ENCODE measurements at regions of chr13 and their contacts with region 1.

Region 1: GRCh38 chr13:110109910-110110309 is 197.0 kb downstream of the COL4A1 start:
- DNase-seq: no peak
- H3K4me3 Mint-ChIP-seq: no peak overlapping the region
- H3K27ac Mint-ChIP-seq: no peak overlapping the region
- H3K4me1 Mint-ChIP-seq: no peaks in the 10 kb centered on the region
- H3K27me3 Mint-ChIP-seq: peaks cover 9% of the 10 kb centered on the region

Region 2: DNA sequence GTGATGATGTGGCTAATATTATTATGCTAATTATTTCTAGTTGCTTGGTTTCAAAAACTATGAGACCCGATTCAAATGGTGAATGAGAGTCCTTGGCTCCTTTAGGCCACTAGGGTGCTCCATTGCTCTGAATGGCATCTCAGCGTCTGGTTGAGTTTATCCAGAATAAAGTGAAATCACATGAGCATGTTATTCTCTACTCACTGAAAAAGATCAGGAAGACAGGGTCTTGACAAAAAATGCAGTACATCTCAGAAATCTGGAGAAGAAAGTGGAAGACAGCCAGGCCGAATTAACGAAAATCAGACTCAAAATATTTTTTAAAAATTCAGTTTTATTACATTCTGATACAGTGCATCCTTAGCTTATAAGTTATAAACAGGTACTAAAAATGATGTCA is 964.3 kb before region 1 on chr13:
- CTCF ChIA-PET with region 1: no interaction called
- intact Hi-C with region 1: loop called (anchors 5 kb)
- DNase-seq: peak; percentile 41
- H3K4me3 Mint-ChIP-seq: no peak overlapping the region
- H3K27ac Mint-ChIP-seq: no peak overlapping the region
- H3K4me1 Mint-ChIP-seq: no peaks in the 10 kb centered on the region
- H3K27me3 Mint-ChIP-seq: peaks cover 35% of the 10 kb centered on the region

Region 3: GRCh38 chr13:110044551-110045111 is 65.3 kb before region 1 on chr13:
- CTCF ChIA-PET with region 1: no interaction called
- intact Hi-C with region 1: no loop called
- DNase-seq: no peak
- H3K4me3 Mint-ChIP-seq: no peak overlapping the region
- H3K27ac Mint-ChIP-seq: no peak overlapping the region
- H3K4me1 Mint-ChIP-seq: no peaks in the 10 kb centered on the region
- H3K27me3 Mint-ChIP-seq: peaks cover 20% of the 10 kb centered on the region